Activated T-helper 1 cell treated with anti-CD3 and anti-CD28 coated beads, Interleukin-12 subunit alpha, Interleukin-12 subunit beta, Interleukin-2, Interleukin-4 antibody, amounts not matched to agents 30 ng/mL and 10 ng/mL and 1 ng/mL, durations not matched to agents 14 hours and 24 hours and 36 hours (primary cell): ENCODE measurements at regions of chr17 and their contacts with region 1.

Region 1: GRCh38 chr17:59440784-59441441 is 109.5 kb downstream of the YPEL2 start:
- DNase-seq: peak; percentile 81
- H3K4me3 Mint-ChIP-seq: peak overlapping the region; percentile 74
- H3K27ac Mint-ChIP-seq: peak overlapping the region; percentile 96
- H3K4me1 Mint-ChIP-seq: peaks cover 61% of the 10 kb centered on the region
- H3K27me3 Mint-ChIP-seq: peaks cover 5% of the 10 kb centered on the region

Region 2: GRCh38 chr17:59155439-59156182 is 285.3 kb before region 1 on chr17 and contains the start of gene PRR11:
- intact Hi-C with region 1: loop called (anchors 5 kb)
- DNase-seq: peak; percentile 94
- H3K4me3 Mint-ChIP-seq: no peak within 1 kb of the TSS
- H3K27ac Mint-ChIP-seq: no peak within 1 kb of the TSS
- H3K4me1 Mint-ChIP-seq: peaks cover 63% of the 10 kb centered on the region
- H3K27me3 Mint-ChIP-seq: no peaks in the 10 kb centered on the region
- total RNA-seq, gene PRR11: 29.4 and 32.7 TPM in 2 replicates

Region 3: DNA sequence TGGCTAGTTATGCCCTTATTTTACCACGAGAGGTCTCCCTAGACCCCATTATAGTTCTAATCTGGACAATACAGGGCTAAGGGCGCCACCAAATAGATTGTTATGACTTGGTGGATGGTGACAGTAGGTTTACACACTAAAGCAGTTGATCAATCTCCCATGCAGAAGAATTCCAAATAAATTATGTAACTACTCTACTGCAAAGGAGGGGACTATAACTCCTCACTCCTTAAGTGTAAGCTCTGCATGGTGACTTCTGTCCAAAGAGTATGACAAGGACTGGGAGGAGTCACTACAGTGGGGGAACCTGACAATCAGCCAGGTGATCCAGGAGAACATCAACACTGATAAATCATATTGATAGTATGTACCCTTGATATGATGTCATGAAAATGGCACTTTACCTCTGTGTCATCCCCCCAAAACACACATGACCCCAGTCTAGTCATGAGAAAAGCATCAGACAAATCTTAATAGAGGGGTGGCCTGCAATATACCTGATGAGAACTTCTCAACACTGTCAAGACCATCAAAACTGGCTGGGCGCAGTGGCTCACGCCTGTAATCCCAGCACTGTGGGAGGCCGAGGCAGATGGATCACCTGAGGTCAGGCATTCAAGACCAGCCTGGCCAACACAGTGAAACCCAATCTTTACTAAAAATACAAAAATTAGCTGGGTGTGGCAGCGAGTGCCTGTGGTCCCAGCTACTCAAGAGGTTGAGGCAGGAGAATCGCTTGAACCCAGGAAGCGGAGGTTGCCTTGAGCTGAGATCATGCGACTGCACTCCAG is 129.6 kb before region 1 on chr17:
- intact Hi-C with region 1: loop called (anchors 1 kb)
- DNase-seq: peak; percentile 40
- H3K4me3 Mint-ChIP-seq: no peak overlapping the region
- H3K27ac Mint-ChIP-seq: no peak overlapping the region
- H3K4me1 Mint-ChIP-seq: peaks cover 8% of the 10 kb centered on the region
- H3K27me3 Mint-ChIP-seq: no peaks in the 10 kb centered on the region

Region 4: DNA sequence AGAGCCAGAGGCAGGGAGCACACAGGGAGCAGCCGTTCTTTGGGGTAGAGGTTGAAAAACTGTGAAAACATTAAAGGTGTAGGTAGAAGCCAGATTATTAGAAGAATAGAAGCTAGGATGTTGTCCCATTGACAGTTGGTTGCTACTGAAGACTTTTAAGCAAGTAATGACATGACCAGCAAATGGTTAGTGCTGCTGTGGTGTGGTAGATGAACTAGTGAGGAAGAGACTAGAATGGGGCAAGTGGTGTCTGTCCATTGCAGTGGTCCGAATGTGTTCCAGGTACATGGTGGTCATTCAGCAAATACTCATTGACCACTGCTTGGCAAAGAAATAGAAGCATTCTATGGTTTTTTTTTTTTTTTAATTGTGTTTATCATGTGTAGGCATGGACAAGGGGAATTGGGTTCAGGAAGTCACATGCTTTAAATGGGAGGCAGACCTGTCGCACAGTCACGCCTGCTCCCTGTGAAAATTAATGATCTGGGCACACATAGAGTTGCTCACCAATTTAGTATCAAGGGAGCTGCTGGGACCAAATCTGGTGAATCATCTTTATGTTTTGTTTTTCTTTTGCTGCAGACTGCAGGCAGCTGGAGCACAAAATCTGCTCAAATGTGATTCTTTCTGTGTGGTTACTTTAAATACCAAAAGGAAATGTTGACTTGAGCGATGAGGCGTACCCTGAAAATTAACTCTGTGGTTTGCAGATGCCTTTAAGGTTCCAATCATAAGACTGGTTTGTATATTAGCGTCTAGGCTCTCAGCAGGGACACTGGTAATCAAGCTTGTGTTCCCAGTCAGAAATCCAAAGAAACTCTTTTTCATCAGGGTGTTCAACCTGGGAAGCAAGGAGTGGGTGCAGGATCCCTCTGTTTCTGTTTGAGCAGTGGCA is 78.8 kb before region 1 on chr17:
- intact Hi-C with region 1: loop called (anchors 1 kb)
- DNase-seq: peak; percentile 40
- H3K4me3 Mint-ChIP-seq: peak overlapping the region; percentile 66
- H3K27ac Mint-ChIP-seq: peak overlapping the region; percentile 93
- H3K4me1 Mint-ChIP-seq: peaks cover 62% of the 10 kb centered on the region
- H3K27me3 Mint-ChIP-seq: no peaks in the 10 kb centered on the region

Region 5: GRCh38 chr17:59456428-59456827 is 15.5 kb after region 1 on chr17:
- intact Hi-C with region 1: no loop called
- DNase-seq: no peak
- H3K4me3 Mint-ChIP-seq: no peak overlapping the region
- H3K27ac Mint-ChIP-seq: no peak overlapping the region
- H3K4me1 Mint-ChIP-seq: no peaks in the 10 kb centered on the region
- H3K27me3 Mint-ChIP-seq: peaks cover 11% of the 10 kb centered on the region

Region 6: DNA sequence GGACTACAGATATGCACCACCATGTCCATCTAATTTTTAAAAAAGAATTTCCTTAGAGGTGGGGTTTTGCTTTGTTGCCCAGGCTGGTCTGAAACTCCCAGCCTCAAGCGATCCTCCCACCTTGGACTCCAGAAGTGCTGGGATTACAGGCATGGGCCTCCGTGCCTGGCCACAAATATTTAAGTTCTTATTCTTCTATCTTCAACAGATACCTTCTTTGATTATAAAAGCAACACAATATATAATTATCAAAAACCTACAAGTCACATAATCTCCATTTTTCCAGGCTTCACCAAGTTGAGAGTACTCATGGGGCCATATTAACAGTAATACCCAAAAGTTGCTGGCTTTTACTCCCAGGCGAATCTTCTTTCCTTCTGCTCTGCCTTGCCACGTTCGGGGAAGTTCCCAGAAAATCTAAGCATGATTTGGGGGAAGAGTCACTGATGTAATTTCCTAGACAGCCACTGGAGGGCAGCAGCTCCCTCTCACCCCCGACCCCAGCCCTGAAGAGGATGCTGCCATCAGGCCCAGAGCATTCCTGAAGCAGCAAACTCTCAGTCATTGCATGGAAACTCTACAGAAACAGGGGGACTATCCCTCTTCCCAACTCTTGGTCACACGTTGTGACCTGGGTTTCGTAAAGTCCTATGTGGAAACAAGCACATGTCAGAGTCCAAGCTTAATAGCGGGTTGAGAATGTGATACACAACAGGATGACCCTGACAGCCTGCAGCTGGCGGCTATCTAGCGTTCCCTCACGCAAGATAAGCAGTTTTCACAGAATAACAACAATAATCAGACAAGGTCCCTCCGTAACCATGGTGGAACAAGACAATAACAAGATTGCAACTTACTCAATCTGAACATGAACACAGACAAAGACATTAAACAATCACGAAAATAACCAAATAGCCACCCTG is 80.6 kb after region 1 on chr17:
- intact Hi-C with region 1: loop called (anchors 1 kb)
- DNase-seq: peak; percentile 42
- H3K4me3 Mint-ChIP-seq: no peak overlapping the region
- H3K27ac Mint-ChIP-seq: no peak overlapping the region
- H3K4me1 Mint-ChIP-seq: peaks cover 7% of the 10 kb centered on the region
- H3K27me3 Mint-ChIP-seq: peaks cover 25% of the 10 kb centered on the region

Region 7: DNA sequence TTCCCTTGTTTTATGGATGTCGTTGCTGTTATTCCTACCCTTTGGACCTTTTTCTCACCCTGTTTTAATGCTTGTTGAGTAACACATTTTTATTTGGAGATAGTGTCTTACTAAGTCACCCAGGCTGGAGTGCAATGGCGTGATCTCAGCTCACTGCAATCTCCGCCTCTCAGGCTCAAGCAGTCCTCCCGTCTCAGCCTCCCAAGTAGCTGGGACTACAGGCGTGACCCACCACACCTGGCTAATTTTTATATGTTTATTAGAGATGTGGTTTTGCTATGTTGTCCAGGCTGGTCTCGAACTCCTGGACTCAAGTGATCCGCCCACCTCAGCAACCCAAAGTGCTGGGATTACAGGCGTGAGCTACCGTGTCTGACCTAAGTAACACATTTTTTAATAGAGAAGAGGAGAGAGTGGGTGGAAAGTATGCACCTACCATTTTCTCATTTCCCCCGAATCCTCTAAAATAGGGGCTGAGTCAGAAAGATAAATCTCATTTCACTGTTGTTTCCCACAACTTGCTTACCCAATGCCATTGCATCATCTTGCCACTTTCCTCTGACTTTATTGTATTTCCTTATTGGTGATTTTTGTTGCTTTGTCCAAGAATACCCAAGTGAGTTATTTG is 131.5 kb after region 1 on chr17:
- intact Hi-C with region 1: loop called (anchors 1 kb)
- DNase-seq: no peak
- H3K4me3 Mint-ChIP-seq: no peak overlapping the region
- H3K27ac Mint-ChIP-seq: peak overlapping the region; percentile 32
- H3K4me1 Mint-ChIP-seq: peaks cover 14% of the 10 kb centered on the region
- H3K27me3 Mint-ChIP-seq: no peaks in the 10 kb centered on the region

Region 8: DNA sequence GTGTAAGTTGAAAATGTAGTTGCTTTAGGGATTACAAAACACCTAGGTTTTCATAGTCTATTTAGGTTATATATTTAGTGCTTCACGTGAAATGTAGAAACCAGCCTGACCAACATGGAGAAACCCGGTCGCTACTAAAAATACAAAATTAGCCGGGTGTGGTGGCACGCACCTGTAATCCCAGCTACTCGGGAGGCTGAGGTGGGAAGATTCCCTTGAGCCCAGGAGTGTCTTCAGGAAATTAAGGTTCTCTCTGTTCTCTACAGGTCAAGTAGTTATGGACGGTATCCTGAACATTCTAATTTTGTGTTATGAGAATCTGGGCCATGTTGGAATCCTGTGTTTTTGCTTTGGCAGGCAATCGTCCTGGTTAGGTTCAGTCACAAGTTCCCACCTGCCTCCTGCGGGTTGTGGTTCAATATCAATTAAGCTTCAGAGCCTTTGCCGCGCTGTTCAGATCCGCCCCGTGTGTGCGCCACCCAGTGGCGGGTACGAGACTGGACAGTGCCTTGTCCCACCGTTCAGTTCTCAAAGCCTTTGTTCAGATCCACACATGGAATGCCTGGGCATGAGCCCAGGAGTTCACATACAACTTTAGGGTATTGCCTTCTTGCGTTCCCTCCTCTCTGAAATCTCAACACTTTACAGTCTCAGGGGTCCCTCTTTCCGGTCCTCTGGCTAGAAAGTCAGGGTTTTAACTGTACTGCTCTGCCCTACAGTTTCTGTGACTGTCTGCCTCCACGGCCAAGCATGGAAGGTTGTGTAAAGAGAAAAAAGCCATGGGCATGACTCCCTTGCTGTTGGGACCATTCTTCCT is 596.1 kb after region 1 on chr17:
- intact Hi-C with region 1: loop called (anchors 10 kb)
- DNase-seq: peak; percentile 53
- H3K4me3 Mint-ChIP-seq: peak overlapping the region; percentile 25
- H3K27ac Mint-ChIP-seq: no peak overlapping the region
- H3K4me1 Mint-ChIP-seq: peaks cover 6% of the 10 kb centered on the region
- H3K27me3 Mint-ChIP-seq: peaks cover 15% of the 10 kb centered on the region